ENCODE measurements at regions of chr20 and their contacts with region 1.

Region 1: GRCh38 chr20:34579979-34580940 is 21.7 kb downstream of the MAP1LC3A start:
- DNase-seq: peak; percentile 44
- H3K4me3 Mint-ChIP-seq: peak overlapping the region; percentile 46
- H3K27ac Mint-ChIP-seq: peak overlapping the region; percentile 54
- H3K4me1 Mint-ChIP-seq: peaks cover 39% of the 10 kb centered on the region
- H3K27me3 Mint-ChIP-seq: no peaks in the 10 kb centered on the region

Region 2: DNA sequence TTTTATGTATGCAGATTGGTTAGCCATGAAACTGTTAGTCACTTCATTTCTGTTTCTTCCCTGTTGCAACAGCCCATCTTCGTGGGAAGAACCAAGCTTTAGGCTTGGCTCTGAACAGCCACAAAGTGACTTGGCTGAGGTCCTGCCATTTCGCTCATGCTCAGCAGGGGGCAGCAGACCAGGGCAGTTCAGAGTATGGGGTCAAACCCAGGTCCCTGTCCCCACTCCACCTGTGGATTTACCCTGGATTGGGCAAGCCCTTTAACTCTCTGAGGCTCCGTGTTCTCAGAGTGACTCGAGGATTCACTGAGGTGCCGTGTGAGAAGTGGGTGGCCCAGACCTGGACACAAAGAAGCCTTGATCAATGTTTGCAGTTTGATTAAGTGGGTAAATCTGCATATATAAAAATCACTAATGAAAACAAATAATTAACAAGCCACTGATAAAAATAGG is 41.6 kb before region 1 on chr20:
- intact Hi-C with region 1: no loop called
- DNase-seq: peak; percentile 29
- H3K4me3 Mint-ChIP-seq: no peak overlapping the region
- H3K27ac Mint-ChIP-seq: no peak overlapping the region
- H3K4me1 Mint-ChIP-seq: peaks cover 24% of the 10 kb centered on the region
- H3K27me3 Mint-ChIP-seq: no peaks in the 10 kb centered on the region

Region 3: GRCh38 chr20:34621383-34622367 is 41.4 kb after region 1 on chr20:
- intact Hi-C with region 1: loop called (anchors 5 kb)
- DNase-seq: no peak
- H3K4me3 Mint-ChIP-seq: no peak overlapping the region
- H3K27ac Mint-ChIP-seq: peak overlapping the region; percentile 32
- H3K4me1 Mint-ChIP-seq: peaks cover 47% of the 10 kb centered on the region
- H3K27me3 Mint-ChIP-seq: no peaks in the 10 kb centered on the region

Region 4: GRCh38 chr20:34720266-34720665 is 140.0 kb after region 1 on chr20:
- intact Hi-C with region 1: loop called (anchors 1 kb)
- DNase-seq: no peak
- H3K4me3 Mint-ChIP-seq: no peak overlapping the region
- H3K27ac Mint-ChIP-seq: no peak overlapping the region
- H3K4me1 Mint-ChIP-seq: peaks cover 34% of the 10 kb centered on the region
- H3K27me3 Mint-ChIP-seq: no peaks in the 10 kb centered on the region

Measured in activated T-helper 1 cell treated with anti-CD3 and anti-CD28 coated beads, Interleukin-12 subunit alpha, Interleukin-12 subunit beta, Interleukin-2, Interleukin-4 antibody, amounts not matched to agents 30 ng/mL and 10 ng/mL and 1 ng/mL, durations not matched to agents 14 hours and 24 hours and 36 hours (primary cell).